Left ventricle myocardium superior (tissue), 1 donor: ENCODE measurements at regions of chr11 and their contacts with region 1.

Region 1: GRCh38 chr11:1837171-1838076 is 1.4 kb upstream of the TNNI2 start:
- DNase-seq: peak; percentile 84
- ATAC-seq: peak; percentile 53

Region 2: DNA sequence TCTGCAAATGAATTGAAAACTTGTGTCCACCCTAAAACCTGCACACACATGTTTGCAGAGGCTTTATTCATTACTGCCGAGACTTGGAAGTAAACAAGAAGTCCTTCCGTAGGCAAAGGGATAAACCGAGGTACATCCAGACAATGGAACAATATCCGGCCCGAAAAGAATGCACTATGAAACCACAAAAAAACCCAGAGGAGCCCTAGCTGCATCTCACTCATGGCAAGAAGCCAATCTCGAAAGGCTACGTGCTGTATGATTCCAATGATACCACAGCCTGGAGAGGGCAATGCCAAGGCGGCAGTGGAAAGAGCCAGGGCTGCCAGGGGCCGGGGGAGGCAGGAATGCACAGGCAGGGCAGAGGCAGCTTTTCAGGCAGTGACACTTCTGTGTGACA is 106.6 kb after region 1 on chr11:
- intact Hi-C with region 1: no loop called
- DNase-seq: peak; percentile 25
- ATAC-seq: no peak

Region 3: GRCh38 chr11:2151500-2152257 is 314.3 kb after region 1 on chr11:
- intact Hi-C with region 1: loop called (anchors 5 kb)
- DNase-seq: peak; percentile 74
- ATAC-seq: peak; percentile 66